ENCODE measurements at regions of chr12 and their contacts with region 1.

Region 1: DNA sequence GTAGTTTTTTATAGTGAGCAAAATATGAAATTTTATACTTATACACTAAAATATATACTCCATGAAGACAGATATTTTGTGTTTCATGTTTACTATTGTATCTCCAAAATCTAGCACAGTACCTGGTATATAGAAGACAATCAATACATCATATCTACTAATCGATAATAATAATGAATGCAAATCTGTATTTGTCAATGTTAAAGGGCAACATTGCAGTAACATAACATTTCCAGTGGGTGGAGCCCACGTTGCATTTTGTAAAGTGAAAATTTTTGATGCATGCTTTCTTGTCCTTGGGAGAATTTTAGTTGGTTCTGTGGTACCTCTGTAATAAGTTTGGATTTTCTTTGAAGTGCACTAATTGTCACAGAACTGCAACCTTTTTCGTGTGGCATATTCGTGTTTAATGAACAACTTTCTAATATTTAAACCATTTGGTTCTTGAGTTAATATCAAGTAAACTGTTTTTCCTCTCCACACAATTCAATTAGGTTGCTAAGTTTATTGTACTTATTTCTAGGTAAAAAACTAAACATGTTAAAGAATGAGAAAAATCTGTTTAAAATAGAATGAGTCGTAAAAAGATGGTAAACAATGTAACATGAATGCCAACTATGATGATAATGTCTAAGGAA is 47.4 kb downstream of the AVPR1A start:
- DNase-seq: peak in 4 of 9 donors; percentile 5 to 14 (median 6)
- ATAC-seq: no peak
- H3K4me3 ChIP-seq: no peak overlapping the region
- H3K4me3 Mint-ChIP-seq: no peak overlapping the region
- H3K27ac ChIP-seq: no peak overlapping the region
- H3K27ac Mint-ChIP-seq: no peak overlapping the region
- H3K4me1 ChIP-seq: no peaks in the 10 kb centered on the region
- H3K4me1 Mint-ChIP-seq: no peaks in the 10 kb centered on the region
- H3K27me3 ChIP-seq: no peaks in the 10 kb centered on the region
- H3K27me3 Mint-ChIP-seq: peaks cover 0 to 13% (median 5%) of the 10 kb centered on the region in 5 donors

Region 2: DNA sequence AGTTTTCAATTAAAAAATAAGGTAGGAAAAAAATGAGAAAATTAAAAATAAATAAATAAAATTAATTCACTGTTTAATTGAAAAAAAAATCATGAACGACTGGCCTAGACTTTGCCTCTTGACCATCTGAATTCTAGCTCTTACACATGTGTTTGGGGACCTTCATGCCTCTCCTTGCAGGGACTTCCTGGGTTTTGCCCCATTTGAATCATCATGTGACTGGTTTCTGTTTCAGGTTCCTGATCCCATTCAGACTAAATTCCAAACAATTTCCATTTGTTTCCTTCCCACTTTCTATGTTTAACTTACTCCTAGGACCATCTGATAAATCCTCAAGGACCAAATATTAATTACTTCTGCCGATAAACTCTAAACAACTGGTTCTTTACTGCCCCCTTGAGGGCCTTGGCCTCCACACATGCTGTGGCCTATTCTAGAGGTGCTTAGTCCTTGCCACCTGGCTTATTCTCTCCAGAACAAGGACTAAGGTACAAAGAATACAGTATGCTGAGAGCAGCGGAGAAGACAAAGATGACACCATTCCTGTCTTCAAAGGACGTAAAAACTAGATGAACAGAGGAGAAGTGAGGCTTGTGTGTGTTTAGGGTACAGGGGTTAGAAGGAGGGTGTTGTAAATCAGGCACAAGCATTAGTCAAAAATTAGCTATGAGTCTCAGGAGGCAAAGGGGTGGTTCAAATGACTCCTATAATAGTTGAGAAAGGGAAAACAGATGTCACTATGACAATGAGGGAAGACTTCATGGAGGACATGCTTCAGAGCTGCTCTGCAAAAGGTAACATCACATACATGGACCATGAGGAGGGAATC is 173.1 kb after region 1 on chr12:
- CTCF ChIA-PET with region 1: no interaction called
- POLR2A ChIA-PET with region 1: no interaction called
- intact Hi-C with region 1: loop called in 1 of 2 experiments (anchors 5 kb)
- DNase-seq: no peak
- ATAC-seq: no peak
- H3K4me3 ChIP-seq: no peak overlapping the region
- H3K4me3 Mint-ChIP-seq: peak overlapping the region in 1 of 10 donors; percentile 18
- H3K27ac ChIP-seq: no peak overlapping the region
- H3K27ac Mint-ChIP-seq: no peak overlapping the region
- H3K4me1 ChIP-seq: no peaks in the 10 kb centered on the region
- H3K4me1 Mint-ChIP-seq: no peaks in the 10 kb centered on the region
- H3K27me3 ChIP-seq: no peaks in the 10 kb centered on the region
- H3K27me3 Mint-ChIP-seq: peaks cover 0 to 4% (median 0%) of the 10 kb centered on the region in 5 donors

Region 3: GRCh38 chr12:63668028-63668799 is 564.6 kb after region 1 on chr12 and contains the start of gene DPY19L2:
- CTCF ChIA-PET with region 1: no interaction called
- POLR2A ChIA-PET with region 1: no interaction called
- intact Hi-C with region 1: loop called in 1 of 2 experiments (anchors 10 kb)
- DNase-seq: peak in 8 of 9 donors; percentile 5 to 50 (median 27)
- ATAC-seq: peak; percentile 41
- H3K4me3 ChIP-seq: peak within 1 kb of the TSS; percentile 46
- H3K4me3 Mint-ChIP-seq: peak within 1 kb of the TSS; percentile 78 to 89 (median 84)
- H3K27ac ChIP-seq: peak within 1 kb of the TSS; percentile 35
- H3K27ac Mint-ChIP-seq: peak within 1 kb of the TSS in 4 of 9 donors; percentile 34 to 74 (median 54)
- H3K4me1 ChIP-seq: no peaks in the 10 kb centered on the region
- H3K4me1 Mint-ChIP-seq: peaks cover 8 to 26% (median 24%) of the 10 kb centered on the region in 7 donors
- H3K27me3 ChIP-seq: no peaks in the 10 kb centered on the region
- H3K27me3 Mint-ChIP-seq: peaks cover 19 to 53% (median 28%) of the 10 kb centered on the region in 5 donors
- total RNA-seq, gene DPY19L2: 0.34 to 3.1 (median 1.4) TPM

Region 4: GRCh38 chr12:63802012-63802608 is 698.5 kb after region 1 on chr12:
- CTCF ChIA-PET with region 1: no interaction called
- POLR2A ChIA-PET with region 1: no interaction called
- intact Hi-C with region 1: loop called in 1 of 2 experiments (anchors 2 kb)
- DNase-seq: peak in 6 of 9 donors; percentile 3 to 34 (median 26)
- ATAC-seq: no peak
- H3K4me3 ChIP-seq: no peak overlapping the region
- H3K4me3 Mint-ChIP-seq: no peak overlapping the region
- H3K27ac ChIP-seq: no peak overlapping the region
- H3K27ac Mint-ChIP-seq: no peak overlapping the region
- H3K4me1 ChIP-seq: no peaks in the 10 kb centered on the region
- H3K4me1 Mint-ChIP-seq: peaks cover 0 to 4% (median 0%) of the 10 kb centered on the region in 7 donors
- H3K27me3 ChIP-seq: no peaks in the 10 kb centered on the region
- H3K27me3 Mint-ChIP-seq: no peaks in the 10 kb centered on the region

Measured in naive thymus-derived CD4-positive, alpha-beta T cell (primary cell).